RWPE1 (cell line): ENCODE measurements at regions of chr7 and their contacts with region 1.

Region 1: GRCh38 chr7:28114056-28114455 is 66.5 kb downstream of the JAZF1 start:
- DNase-seq: no peak
- H3K27ac ChIP-seq: no peak overlapping the region
- CTCF ChIP-seq: no peak

Region 2: GRCh38 chr7:28096713-28097112 is 17.3 kb before region 1 on chr7:
- CTCF ChIA-PET with region 1: interaction called, 10 read pairs
- POLR2A ChIA-PET with region 1: no interaction called
- DNase-seq: peak; percentile 79
- H3K27ac ChIP-seq: no peak overlapping the region
- CTCF ChIP-seq: peak; percentile 89

Region 3: GRCh38 chr7:28539289-28539981 is 425.4 kb after region 1 on chr7:
- CTCF ChIA-PET with region 1: no interaction called
- POLR2A ChIA-PET with region 1: no interaction called
- DNase-seq: no peak
- H3K27ac ChIP-seq: no peak overlapping the region
- CTCF ChIP-seq: no peak